ENCODE measurements at regions of chr12 and their contacts with region 1.

Region 1: GRCh38 chr12:113208041-113208934 is 13.0 kb upstream of the TPCN1 start:
- DNase-seq: peak; percentile 86
- H3K4me3 Mint-ChIP-seq: peak overlapping the region; percentile 38
- H3K27ac Mint-ChIP-seq: peak overlapping the region; percentile 91
- H3K4me1 Mint-ChIP-seq: peaks cover 50% of the 10 kb centered on the region
- H3K27me3 Mint-ChIP-seq: no peaks in the 10 kb centered on the region

Region 2: DNA sequence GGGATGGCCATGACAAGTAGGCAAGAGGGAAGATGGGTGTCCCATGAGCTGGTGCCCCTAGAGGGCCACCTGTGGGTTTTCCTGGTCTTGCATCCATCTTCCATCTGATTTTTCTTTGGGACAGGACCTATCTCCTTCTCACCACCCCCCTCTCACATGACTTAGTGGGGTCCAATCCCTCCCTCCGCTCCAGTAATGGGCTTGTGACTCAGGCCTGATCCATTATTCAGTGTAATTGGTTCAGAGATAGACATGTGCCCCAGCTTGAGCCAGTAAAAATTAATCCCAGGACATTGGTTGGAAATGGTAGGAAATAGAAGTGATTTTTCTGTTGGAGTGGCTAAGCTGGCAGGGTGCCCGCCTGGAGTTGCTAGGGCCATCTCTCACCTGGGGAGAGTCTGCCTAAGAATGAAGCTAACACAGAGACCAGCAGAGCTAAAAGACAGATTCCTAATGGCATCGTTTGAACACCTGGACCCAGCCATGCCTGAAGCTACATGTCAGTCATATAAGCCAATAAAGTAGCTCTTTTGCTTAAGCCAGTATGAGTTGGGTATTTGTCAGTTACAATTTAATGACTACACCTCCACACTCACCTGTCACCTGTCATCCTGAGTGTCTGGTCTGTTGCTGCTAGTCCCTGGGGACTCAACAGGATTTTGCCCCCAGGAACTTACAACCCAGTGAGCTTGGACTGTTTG is 87.5 kb before region 1 on chr12:
- CTCF ChIA-PET with region 1: no interaction called
- POLR2A ChIA-PET with region 1: no interaction called
- intact Hi-C with region 1: no loop called
- DNase-seq: no peak
- H3K4me3 Mint-ChIP-seq: no peak overlapping the region
- H3K27ac Mint-ChIP-seq: no peak overlapping the region
- H3K4me1 Mint-ChIP-seq: no peaks in the 10 kb centered on the region
- H3K27me3 Mint-ChIP-seq: no peaks in the 10 kb centered on the region

Region 3: GRCh38 chr12:113184900-113185773 is 23.2 kb before region 1 on chr12 and contains the starts of genes DDX54 and RITA1:
- CTCF ChIA-PET with region 1: interaction called, 3 read pairs
- POLR2A ChIA-PET with region 1: interaction called, 14 read pairs
- intact Hi-C with region 1: loop called (anchors 1 kb)
- DNase-seq: peak; percentile 93
- H3K4me3 Mint-ChIP-seq: peak within 1 kb of the TSS; percentile 94
- H3K27ac Mint-ChIP-seq: peak within 1 kb of the TSS; percentile 93
- H3K4me1 Mint-ChIP-seq: peaks cover 24% of the 10 kb centered on the region
- H3K27me3 Mint-ChIP-seq: no peaks in the 10 kb centered on the region
- total RNA-seq, gene DDX54: 107 to 109 TPM
- total RNA-seq, gene RITA1: 18.7 to 22.0 TPM

Region 4: GRCh38 chr12:113261847-113262470 is 53.7 kb after region 1 on chr12:
- CTCF ChIA-PET with region 1: interaction called, 3 read pairs
- POLR2A ChIA-PET with region 1: interaction called, 4 read pairs
- intact Hi-C with region 1: loop called (anchors 5 kb)
- DNase-seq: peak; percentile 64
- H3K4me3 Mint-ChIP-seq: no peak overlapping the region
- H3K27ac Mint-ChIP-seq: peak overlapping the region; percentile 51
- H3K4me1 Mint-ChIP-seq: peaks cover 46% of the 10 kb centered on the region
- H3K27me3 Mint-ChIP-seq: no peaks in the 10 kb centered on the region

Measured in activated CD4-positive, alpha-beta memory T cell treated with anti-CD3 and anti-CD28 coated beads for 36 hours (primary cell).